Pancreas (tissue), 10 donors: ENCODE measurements at regions of chr7 and their contacts with region 1.

Region 1: DNA sequence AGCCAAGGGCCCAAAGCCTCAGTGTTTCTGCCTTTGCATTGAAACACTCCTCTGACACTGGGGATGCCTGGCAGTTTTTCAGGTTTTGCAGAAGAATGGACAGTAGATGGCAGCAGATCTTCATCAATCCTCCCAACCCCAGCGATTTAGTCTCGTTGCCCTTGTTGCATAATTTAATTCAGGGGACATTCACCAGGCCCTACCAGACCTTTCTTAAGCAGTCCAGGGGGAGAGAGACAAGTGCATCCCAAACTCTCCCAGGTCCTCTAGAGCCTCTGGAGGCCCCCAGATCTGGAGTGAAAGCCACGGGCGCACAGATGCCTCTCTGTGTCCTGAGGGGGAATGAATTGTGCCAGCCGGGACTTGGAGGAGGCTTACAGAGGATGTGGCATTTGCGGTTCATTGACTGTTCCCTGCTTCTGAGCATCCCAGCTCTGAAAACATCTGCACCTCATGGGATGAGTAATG is 29.6 kb downstream of the MINDY4 start:
- DNase-seq: peak in 3 of 6 donors; percentile 41 to 76 (median 43)
- ATAC-seq: peak; percentile 84 to 91 (median 88)
- H3K4me3 ChIP-seq: no peak overlapping the region
- H3K27ac ChIP-seq: no peak overlapping the region
- H3K4me1 ChIP-seq: peaks cover 0 to 4% (median 0%) of the 10 kb centered on the region in 3 donors
- H3K27me3 ChIP-seq: no peaks in the 10 kb centered on the region
- CTCF ChIP-seq: peak in 3 of 4 donors; percentile 40 to 55 (median 42)

Region 2: GRCh38 chr7:30911561-30911969 is 110.7 kb after region 1 on chr7 and contains the start of gene AQP1:
- intact Hi-C with region 1: loop called in 1 of 3 experiments (anchors 10 kb)
- DNase-seq: peak; percentile 68 to 94 (median 82)
- ATAC-seq: peak; percentile 48 to 61 (median 59)
- H3K4me3 ChIP-seq: peak within 1 kb of the TSS; percentile 13 to 47 (median 36)
- H3K27ac ChIP-seq: peak within 1 kb of the TSS; percentile 39 to 63 (median 62)
- H3K4me1 ChIP-seq: peaks cover 9 to 45% (median 31%) of the 10 kb centered on the region in 3 donors
- H3K27me3 ChIP-seq: no peaks in the 10 kb centered on the region
- CTCF ChIP-seq: no peak
- total RNA-seq, gene AQP1: 146 to 273 (median 196) TPM

Region 3: GRCh38 chr7:30974605-30975255 is 173.9 kb after region 1 on chr7:
- intact Hi-C with region 1: loop called (anchors 5 to 10 kb)
- DNase-seq: peak; percentile 77 to 81 (median 79)
- ATAC-seq: peak; percentile 89 to 98 (median 94)
- H3K4me3 ChIP-seq: no peak overlapping the region
- H3K27ac ChIP-seq: peak overlapping the region in 2 of 4 donors; percentile 41 to 64
- H3K4me1 ChIP-seq: no peaks in the 10 kb centered on the region
- H3K27me3 ChIP-seq: no peaks in the 10 kb centered on the region
- CTCF ChIP-seq: peak; percentile 75 to 80 (median 78)

Region 4: GRCh38 chr7:31122649-31123058 is 321.8 kb after region 1 on chr7:
- intact Hi-C with region 1: loop called in 2 of 3 experiments (anchors 10 kb)
- DNase-seq: peak in 5 of 6 donors; percentile 58 to 80 (median 61)
- ATAC-seq: peak; percentile 96 to 97 (median 96)
- H3K4me3 ChIP-seq: no peak overlapping the region
- H3K27ac ChIP-seq: no peak overlapping the region
- H3K4me1 ChIP-seq: peaks cover 0 to 5% (median 0%) of the 10 kb centered on the region in 3 donors
- H3K27me3 ChIP-seq: no peaks in the 10 kb centered on the region
- CTCF ChIP-seq: peak; percentile 66 to 77 (median 74)

Region 5: DNA sequence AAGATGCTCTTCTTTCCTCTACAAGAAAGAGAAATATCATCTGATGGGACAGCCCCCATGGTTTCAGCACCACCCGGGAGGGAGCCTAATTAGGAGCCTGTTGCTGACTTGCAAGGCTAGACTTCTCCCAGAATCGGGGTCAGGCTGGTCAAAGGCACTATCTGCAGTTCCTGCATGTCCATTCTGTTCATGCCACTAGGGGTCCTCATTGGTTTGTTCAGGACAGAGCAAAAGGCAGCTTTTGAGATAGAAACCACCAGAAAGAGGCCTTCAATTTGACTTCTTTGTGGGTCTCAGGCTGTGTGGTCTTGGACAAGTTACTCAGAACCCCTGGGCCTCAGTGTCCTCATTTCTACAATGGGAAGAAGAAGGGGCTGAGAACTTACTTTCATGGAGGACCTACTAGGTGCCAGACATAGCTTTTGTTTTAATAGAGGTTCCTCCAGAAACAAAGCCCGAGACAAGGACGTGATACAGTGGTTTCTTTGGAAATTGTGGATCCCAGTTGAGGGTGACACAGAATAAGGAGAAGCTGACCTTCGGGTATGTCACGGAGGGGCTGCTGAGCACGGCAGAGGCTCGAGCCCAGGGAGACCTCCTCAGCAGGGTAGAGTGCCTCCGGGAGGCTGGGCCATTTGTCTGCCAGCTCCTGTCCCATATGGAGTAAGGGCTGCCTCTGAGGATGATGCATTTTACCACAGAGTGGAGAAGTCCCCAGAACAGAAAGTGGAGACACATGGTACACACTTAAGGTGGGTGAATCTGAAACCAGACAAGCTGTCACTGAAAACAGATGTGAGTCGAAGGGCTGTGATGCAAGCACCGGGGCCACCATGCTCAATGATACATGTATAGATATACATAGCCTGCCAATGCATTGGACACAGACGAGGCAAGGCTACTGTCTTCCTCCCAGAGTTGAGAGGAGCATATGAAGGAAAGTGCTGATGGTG is 572.8 kb after region 1 on chr7:
- intact Hi-C with region 1: no loop called
- DNase-seq: peak in 4 of 6 donors; percentile 13 to 61 (median 32)
- ATAC-seq: peak; percentile 73 to 91 (median 87)
- H3K4me3 ChIP-seq: no peak overlapping the region
- H3K27ac ChIP-seq: no peak overlapping the region
- H3K4me1 ChIP-seq: peaks cover 0 to 6% (median 6%) of the 10 kb centered on the region in 3 donors
- H3K27me3 ChIP-seq: no peaks in the 10 kb centered on the region
- CTCF ChIP-seq: peak; percentile 29 to 58 (median 46)